PC-3 (cell line): ENCODE measurements at regions of chr1 and their contacts with region 1.

Region 1: GRCh38 chr1:155084722-155085503 is 6.3 kb downstream of the EFNA3 start:
- DNase-seq: peak; percentile 97
- ATAC-seq: peak; percentile 75
- H3K4me3 ChIP-seq: peak overlapping the region; percentile 73
- H3K27ac ChIP-seq: peak overlapping the region; percentile 83
- H3K4me1 ChIP-seq: peaks cover 60% of the 10 kb centered on the region
- H3K27me3 ChIP-seq: peaks cover 33% of the 10 kb centered on the region
- CTCF ChIP-seq: peak; percentile 92

Region 2: DNA sequence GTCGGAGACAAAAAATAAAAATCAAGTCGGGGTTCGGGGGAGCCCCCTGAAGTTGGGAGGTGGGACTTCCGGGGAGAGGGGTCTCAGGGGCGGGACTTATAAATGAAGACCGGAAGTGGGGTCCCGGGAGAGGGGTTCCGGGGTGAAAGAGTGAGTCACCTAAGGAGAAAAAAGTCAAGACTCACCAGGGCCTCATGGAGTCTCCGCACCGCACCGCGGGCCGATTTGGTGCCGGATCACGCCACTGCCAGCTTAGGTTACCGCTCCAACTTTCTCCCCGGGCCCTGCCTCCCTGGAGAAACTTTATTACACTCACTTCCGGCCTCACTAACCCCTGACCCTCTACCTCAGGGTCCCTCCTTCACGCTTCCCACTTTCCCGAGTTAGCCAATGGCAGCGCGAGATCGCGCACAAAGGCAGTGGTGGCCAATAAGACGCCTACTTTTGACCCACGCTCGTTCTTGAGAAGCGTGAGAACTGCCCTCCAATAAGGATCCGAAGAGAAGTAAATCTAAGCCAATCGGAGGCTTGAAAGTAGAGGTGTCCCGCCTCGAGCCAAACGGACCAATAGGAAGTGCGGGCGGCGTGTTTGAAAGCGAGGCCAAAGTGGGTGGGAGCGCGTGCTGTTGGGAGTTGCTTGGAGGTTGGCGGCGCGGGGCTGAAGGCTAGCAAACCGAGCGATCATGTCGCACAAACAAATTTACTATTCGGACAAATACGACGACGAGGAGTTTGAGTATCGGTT is 110.7 kb before region 1 on chr1 and contains the start of gene CKS1B:
- CTCF ChIA-PET with region 1: interaction called, 9 read pairs
- POLR2A ChIA-PET with region 1: interaction called, 3 read pairs
- intact Hi-C with region 1: loop called (anchors 1 kb)
- DNase-seq: peak; percentile 100
- ATAC-seq: peak; percentile 73
- H3K4me3 ChIP-seq: peak within 1 kb of the TSS; percentile 80
- H3K27ac ChIP-seq: peak within 1 kb of the TSS; percentile 96
- H3K4me1 ChIP-seq: peaks cover 55% of the 10 kb centered on the region
- H3K27me3 ChIP-seq: no peaks in the 10 kb centered on the region
- CTCF ChIP-seq: no peak
- total RNA-seq, gene CKS1B: 330 and 390 TPM in 2 replicates

Region 3: GRCh38 chr1:155044812-155045690 is 39.9 kb before region 1 on chr1:
- CTCF ChIA-PET with region 1: interaction called, 27 read pairs
- POLR2A ChIA-PET with region 1: no interaction called
- intact Hi-C with region 1: loop called (anchors 1 kb)
- DNase-seq: peak; percentile 87
- ATAC-seq: peak; percentile 98
- H3K4me3 ChIP-seq: no peak overlapping the region
- H3K27ac ChIP-seq: no peak overlapping the region
- H3K4me1 ChIP-seq: peaks cover 25% of the 10 kb centered on the region
- H3K27me3 ChIP-seq: no peaks in the 10 kb centered on the region
- CTCF ChIP-seq: peak; percentile 94

Region 4: GRCh38 chr1:155063550-155064110 is 21.3 kb before region 1 on chr1 and contains the start of gene EFNA4:
- CTCF ChIA-PET with region 1: interaction called, 14 read pairs
- POLR2A ChIA-PET with region 1: no interaction called
- intact Hi-C with region 1: loop called (anchors 1 kb)
- DNase-seq: peak; percentile 90
- ATAC-seq: peak; percentile 76
- H3K4me3 ChIP-seq: peak within 1 kb of the TSS; percentile 76
- H3K27ac ChIP-seq: 0 out of 2 replicates have a peak within 1 kb of the TSS, but pooled peaks have one; percentile 3
- H3K4me1 ChIP-seq: peaks cover 21% of the 10 kb centered on the region
- H3K27me3 ChIP-seq: no peaks in the 10 kb centered on the region
- CTCF ChIP-seq: no peak
- total RNA-seq, gene EFNA4: 36.7 and 37.4 TPM in 2 replicates

Region 5: DNA sequence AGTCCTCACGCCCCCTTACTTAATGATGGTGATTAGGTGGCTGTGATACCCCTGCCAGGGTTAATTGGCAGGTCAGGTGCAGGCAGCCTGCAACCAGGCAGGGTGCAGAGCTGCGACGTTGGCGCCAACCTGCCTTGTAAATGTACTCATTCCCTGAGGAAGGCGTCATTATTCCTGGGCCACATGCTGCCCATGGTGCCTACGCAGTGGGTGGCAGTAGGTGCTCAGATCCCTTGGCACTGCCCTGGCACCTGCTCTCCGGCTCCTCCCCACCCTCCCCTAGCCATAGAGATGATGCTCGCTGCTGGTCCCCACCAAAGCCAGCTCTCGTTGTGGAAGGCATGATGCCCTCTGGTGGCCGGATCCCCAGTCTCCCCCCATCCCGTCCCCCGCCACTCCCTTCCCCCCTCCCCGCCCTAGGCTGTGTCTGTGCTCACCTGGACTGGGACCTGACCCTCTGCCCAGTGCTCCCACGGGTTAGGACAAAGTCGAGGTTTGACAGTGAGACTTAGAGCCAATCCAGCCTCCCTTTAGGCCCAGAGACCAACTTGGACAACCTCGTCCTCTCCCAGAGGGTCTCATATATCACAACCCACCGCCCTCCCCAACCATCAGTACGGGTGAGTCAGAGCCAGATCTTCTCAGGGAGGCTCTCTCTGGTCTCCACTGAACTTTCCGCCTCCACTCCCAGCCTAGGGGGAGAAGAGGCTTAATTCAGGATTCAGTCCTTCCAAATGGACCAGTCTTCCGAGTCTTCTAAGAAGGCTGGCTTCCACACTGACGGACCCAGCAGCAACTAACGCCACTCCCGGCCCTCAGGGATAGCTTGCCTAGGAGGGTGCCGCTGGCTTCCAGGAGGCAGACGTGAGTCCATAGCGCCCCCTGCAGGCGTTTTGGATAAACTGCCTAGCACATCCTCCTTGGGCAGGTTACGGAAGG is 82.5 kb after region 1 on chr1:
- CTCF ChIA-PET with region 1: interaction called, 14 read pairs
- POLR2A ChIA-PET with region 1: no interaction called
- intact Hi-C with region 1: no loop called
- DNase-seq: peak; percentile 94
- ATAC-seq: peak; percentile 86
- H3K4me3 ChIP-seq: peak overlapping the region; percentile 67
- H3K27ac ChIP-seq: peak overlapping the region; percentile 19
- H3K4me1 ChIP-seq: peaks cover 12% of the 10 kb centered on the region; the same call in 1 of the 2 replicates
- H3K27me3 ChIP-seq: no peaks in the 10 kb centered on the region
- CTCF ChIP-seq: peak; percentile 99

Region 6: DNA sequence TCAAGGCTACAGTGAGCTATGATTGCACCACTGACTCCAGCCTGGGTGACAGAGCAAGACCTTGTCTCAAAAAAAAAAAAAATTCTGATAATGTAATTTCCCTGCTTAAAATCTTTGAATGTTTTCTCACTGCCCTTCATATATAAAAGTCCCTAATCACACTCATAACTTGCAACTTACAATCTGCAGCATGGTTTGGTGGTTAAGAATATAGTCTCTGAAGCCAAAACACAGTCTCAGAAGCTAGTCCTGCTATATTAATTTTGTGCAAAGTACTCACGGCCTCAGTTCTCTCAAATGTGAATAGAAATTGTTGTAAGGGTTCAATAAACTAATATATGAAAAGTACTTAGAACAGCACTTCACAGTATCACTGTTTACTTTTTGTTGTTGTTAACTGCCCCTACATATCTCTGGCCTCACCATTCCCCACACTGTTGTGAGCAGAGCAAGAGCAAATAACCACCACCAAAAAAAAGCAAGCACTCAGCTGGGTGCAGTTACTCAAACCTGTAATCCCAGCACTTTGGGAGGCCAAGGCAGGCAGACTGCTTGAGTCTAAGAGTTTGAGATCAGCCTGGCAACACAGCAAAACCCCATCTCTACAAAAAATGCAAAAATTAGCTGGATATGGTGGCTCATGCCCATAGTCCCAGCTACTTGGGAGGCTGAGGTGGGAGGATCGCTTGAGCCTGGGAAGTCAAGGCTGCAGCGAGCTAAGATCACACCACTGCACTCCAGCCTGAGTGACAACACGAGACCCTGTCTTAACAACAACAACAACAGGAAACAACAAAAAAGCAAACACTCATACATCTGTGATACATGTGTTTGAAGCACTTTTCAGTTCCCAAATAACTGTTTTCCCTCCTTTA is 455.3 kb after region 1 on chr1:
- CTCF ChIA-PET with region 1: no interaction called
- POLR2A ChIA-PET with region 1: no interaction called
- intact Hi-C with region 1: no loop called
- DNase-seq: no peak
- ATAC-seq: no peak
- H3K4me3 ChIP-seq: no peak overlapping the region
- H3K27ac ChIP-seq: no peak overlapping the region
- H3K4me1 ChIP-seq: no peaks in the 10 kb centered on the region
- H3K27me3 ChIP-seq: no peaks in the 10 kb centered on the region
- CTCF ChIP-seq: no peak